Caco-2 (cell line): ENCODE measurements at regions of chr13 and their contacts with region 1.

Region 1: GRCh38 chr13:112968908-112969691 is at the start of gene MCF2L:
- DNase-seq: peak; percentile 60 to 73
- H3K4me3 ChIP-seq: peak within 1 kb of the TSS; percentile 89
- H3K4me3 Mint-ChIP-seq: peak within 1 kb of the TSS; percentile 85
- H3K27ac Mint-ChIP-seq: peak within 1 kb of the TSS; percentile 60
- H3K4me1 ChIP-seq: peaks cover 4% of the 10 kb centered on the region; the same call in 1 of the 2 replicates
- H3K4me1 Mint-ChIP-seq: no peaks in the 10 kb centered on the region
- H3K27me3 ChIP-seq: no peaks in the 10 kb centered on the region; the same call in 1 of the 2 replicates
- H3K27me3 Mint-ChIP-seq: peaks cover 5% of the 10 kb centered on the region
- CTCF ChIP-seq: peak in 1 of 2 experiments; percentile 49
- total RNA-seq, gene MCF2L: 22.1 and 24.4 TPM in 2 replicates

Region 2: DNA sequence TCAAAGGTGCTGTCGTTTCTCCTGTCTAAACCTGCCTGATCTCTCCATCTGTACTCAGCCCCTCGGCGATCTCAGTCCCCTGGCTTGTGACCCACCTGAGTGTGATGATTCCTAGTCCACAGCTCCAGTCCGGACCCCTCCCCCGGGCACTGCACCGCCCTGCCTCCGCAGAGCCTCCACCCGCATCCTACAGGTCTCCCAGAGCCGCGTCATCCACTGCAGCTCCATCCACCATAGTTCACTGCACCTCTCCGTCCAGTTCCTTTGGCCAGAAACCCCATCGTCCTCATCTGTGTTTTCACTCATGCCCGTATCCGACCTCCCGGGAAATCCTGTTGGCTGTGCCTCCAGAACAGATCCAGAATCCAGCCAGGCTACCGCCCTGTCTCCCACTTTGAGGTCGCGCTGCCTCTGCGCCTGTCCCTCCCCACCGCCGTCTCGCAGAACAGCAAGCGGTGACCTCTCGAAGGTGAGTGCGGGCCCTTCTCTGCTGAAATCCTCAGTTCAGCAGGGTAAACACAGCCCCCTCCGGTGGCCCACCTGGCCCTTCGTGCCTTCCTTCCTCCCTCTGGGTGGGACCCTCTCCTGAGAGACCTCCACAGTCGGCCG is 51.9 kb before region 1 on chr13:
- CTCF ChIA-PET with region 1: no interaction called
- POLR2A ChIA-PET with region 1: no interaction called
- intact Hi-C with region 1: no loop called
- DNase-seq: no peak
- H3K4me3 ChIP-seq: no peak overlapping the region
- H3K4me3 Mint-ChIP-seq: no peak overlapping the region
- H3K27ac Mint-ChIP-seq: peak overlapping the region; percentile 13
- H3K4me1 ChIP-seq: peaks cover 11% of the 10 kb centered on the region
- H3K4me1 Mint-ChIP-seq: peaks cover 19% of the 10 kb centered on the region
- H3K27me3 ChIP-seq: no peaks in the 10 kb centered on the region
- H3K27me3 Mint-ChIP-seq: no peaks in the 10 kb centered on the region
- CTCF ChIP-seq: no peak

Region 3: DNA sequence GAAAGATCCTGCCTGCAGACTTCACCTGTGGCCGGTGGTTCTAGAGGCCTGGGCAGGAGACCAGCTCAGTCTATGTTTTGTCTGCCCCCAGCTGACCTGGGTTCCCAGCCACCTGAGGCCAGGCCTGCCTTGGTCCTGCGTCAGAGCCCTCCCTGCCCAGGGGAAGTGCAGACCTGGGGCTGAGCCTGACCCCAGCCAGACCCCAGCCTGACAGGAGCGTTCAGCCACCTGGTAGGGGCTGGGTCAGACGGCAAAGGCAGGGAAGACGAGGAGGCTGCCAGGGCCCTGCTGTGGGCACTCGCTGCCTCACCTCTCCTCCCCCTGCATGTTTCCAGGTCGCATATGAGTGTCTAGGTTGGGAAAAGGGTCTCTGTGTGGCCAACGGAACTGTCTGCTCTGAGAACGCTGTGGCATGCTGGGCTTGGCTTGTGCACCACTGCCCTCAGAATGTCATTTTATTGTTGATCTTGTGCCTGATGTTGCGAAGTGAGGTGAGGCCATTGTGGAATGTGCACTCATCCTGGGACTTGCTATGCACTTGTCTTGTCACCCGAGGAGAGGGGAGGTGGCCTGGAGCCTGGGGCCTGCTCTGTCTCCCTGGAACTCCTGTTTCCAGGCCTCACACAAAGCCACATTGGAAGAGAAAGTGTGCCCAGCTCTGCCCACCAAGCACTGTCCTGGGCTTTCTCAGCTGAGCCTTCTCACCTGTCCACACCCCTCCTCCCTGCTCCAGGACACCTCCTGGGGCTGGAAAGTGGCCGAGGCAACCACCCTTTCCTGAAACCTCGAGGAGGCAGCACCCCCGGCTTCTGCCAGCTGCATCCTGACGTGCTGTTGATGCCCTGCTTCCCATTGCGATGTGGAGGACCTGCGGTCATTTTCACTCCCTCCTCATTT is 15.3 kb before region 1 on chr13:
- CTCF ChIA-PET with region 1: no interaction called
- POLR2A ChIA-PET with region 1: no interaction called
- intact Hi-C with region 1: loop called (anchors 1 kb)
- DNase-seq: peak; percentile 31 to 49
- H3K4me3 ChIP-seq: no peak overlapping the region
- H3K4me3 Mint-ChIP-seq: no peak overlapping the region
- H3K27ac Mint-ChIP-seq: no peak overlapping the region
- H3K4me1 ChIP-seq: peaks cover 17% of the 10 kb centered on the region; the same call in 1 of the 2 replicates
- H3K4me1 Mint-ChIP-seq: peaks cover 6% of the 10 kb centered on the region
- H3K27me3 ChIP-seq: no peaks in the 10 kb centered on the region
- H3K27me3 Mint-ChIP-seq: no peaks in the 10 kb centered on the region
- CTCF ChIP-seq: no peak

Region 4: DNA sequence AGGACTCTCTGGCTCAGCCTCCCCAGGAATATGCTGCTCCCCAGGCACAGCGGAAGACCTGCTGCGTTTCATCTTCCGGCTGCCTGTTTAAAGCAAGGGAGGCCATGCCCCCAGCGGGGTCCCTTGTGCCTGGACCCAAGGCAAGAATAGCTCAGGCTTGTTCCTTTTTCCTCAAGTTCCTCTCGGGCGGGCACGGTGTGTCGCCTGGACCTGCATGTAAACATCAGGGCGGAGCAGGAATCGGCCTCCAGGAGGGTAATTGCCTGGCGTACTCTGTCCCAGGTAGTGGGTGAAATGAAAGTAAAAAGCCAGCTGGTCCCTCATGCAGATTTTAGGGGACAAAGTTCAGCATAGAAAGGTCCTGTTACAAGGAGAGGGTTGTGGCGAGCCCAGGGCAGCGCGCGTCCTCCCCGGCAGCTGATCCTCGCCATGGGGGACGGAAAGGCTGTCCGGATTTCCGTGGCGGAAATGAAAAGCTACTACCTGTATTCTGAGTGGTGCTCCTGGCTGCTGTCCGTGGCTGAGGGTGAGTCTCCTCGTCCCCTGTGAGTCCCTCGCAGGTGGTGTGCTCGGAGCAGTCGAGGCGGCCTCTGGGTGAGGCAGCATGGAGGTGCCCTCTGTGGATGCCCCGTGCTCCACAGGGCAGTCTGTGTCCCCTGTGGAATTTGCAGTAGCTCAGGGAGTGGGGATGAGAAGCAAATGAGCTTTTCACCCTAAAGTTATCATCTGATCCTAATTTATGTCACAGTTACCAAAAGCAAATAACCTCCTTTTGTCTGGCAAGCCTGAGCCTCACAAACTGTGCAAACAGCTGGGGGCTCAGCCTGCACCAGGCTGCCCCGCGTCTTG is 16.1 kb after region 1 on chr13:
- CTCF ChIA-PET with region 1: interaction called, 10 read pairs
- POLR2A ChIA-PET with region 1: no interaction called
- intact Hi-C with region 1: loop called (anchors 1 kb)
- DNase-seq: peak in 1 of 2 experiments; percentile 60
- H3K4me3 ChIP-seq: peak overlapping the region; percentile 33
- H3K4me3 Mint-ChIP-seq: peak overlapping the region; percentile 66
- H3K27ac Mint-ChIP-seq: peak overlapping the region; percentile 53
- H3K4me1 ChIP-seq: peaks cover 27% of the 10 kb centered on the region
- H3K4me1 Mint-ChIP-seq: peaks cover 20% of the 10 kb centered on the region
- H3K27me3 ChIP-seq: no peaks in the 10 kb centered on the region
- H3K27me3 Mint-ChIP-seq: no peaks in the 10 kb centered on the region
- CTCF ChIP-seq: no peak

Region 5: DNA sequence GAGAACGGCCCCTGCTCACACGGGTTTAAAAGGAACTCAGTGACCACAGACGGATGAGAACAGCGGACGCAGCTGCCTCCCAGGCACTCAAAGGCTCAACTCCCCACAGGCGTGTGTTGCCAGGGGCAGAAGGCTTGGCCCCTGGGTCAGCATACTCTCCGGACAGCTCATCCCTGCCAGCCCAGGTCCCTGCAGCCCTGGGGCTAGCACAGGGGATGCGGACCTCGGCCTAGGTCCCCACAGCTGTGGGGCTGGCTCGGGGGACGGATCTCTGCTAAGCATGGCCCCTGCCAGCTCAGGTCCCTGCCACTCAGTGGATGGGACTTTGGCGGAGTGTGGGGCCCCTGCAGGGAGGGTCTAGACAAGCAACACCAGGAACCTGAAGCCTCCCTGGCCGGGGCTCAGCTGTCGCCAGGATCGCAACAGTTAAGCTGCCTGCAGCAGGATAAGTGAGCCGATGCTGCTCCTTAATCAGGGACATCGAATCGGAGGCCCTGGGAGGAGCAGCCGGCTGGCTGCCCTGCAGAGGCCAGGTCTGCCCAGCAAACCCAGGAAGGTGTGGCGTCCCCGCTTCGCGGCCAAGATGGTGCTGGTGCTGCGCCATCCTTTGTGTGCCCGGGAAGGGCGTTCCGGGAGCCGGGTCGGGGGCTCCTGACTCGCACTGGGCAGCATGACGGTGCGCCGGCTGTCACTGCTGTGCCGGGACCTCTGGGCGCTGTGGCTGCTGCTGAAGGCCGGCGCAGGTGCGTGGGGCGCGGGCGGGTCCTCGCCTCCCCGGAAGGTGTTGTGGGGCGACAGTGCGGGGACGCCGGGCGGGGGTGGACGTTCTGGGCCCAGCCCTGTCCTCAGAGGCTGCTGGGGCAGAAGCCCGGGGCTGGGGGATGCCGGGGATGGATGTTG is 32.4 kb after region 1 on chr13:
- CTCF ChIA-PET with region 1: interaction called, 18 read pairs
- POLR2A ChIA-PET with region 1: no interaction called
- intact Hi-C with region 1: loop called (anchors 1 kb)
- DNase-seq: peak; percentile 79 to 86
- H3K4me3 ChIP-seq: peak overlapping the region; percentile 36
- H3K4me3 Mint-ChIP-seq: peak overlapping the region; percentile 78
- H3K27ac Mint-ChIP-seq: no peak overlapping the region
- H3K4me1 ChIP-seq: peaks cover 21% of the 10 kb centered on the region
- H3K4me1 Mint-ChIP-seq: no peaks in the 10 kb centered on the region
- H3K27me3 ChIP-seq: no peaks in the 10 kb centered on the region
- H3K27me3 Mint-ChIP-seq: no peaks in the 10 kb centered on the region
- CTCF ChIP-seq: no peak

Region 6: GRCh38 chr13:113017506-113018215 is 48.6 kb after region 1 on chr13:
- CTCF ChIA-PET with region 1: no interaction called
- POLR2A ChIA-PET with region 1: no interaction called
- intact Hi-C with region 1: no loop called
- DNase-seq: no peak
- H3K4me3 ChIP-seq: no peak overlapping the region
- H3K4me3 Mint-ChIP-seq: no peak overlapping the region
- H3K27ac Mint-ChIP-seq: no peak overlapping the region
- H3K4me1 ChIP-seq: peaks cover 17% of the 10 kb centered on the region
- H3K4me1 Mint-ChIP-seq: peaks cover 11% of the 10 kb centered on the region
- H3K27me3 ChIP-seq: no peaks in the 10 kb centered on the region
- H3K27me3 Mint-ChIP-seq: no peaks in the 10 kb centered on the region
- CTCF ChIP-seq: no peak

Region 7: GRCh38 chr13:113029487-113030258 is 60.6 kb after region 1 on chr13:
- CTCF ChIA-PET with region 1: interaction called, 8 read pairs
- POLR2A ChIA-PET with region 1: no interaction called
- intact Hi-C with region 1: loop called (anchors 1 kb)
- DNase-seq: peak; percentile 74 to 87
- H3K4me3 ChIP-seq: no peak overlapping the region
- H3K4me3 Mint-ChIP-seq: no peak overlapping the region
- H3K27ac Mint-ChIP-seq: no peak overlapping the region
- H3K4me1 ChIP-seq: no peaks in the 10 kb centered on the region
- H3K4me1 Mint-ChIP-seq: peaks cover 11% of the 10 kb centered on the region
- H3K27me3 ChIP-seq: no peaks in the 10 kb centered on the region
- H3K27me3 Mint-ChIP-seq: no peaks in the 10 kb centered on the region
- CTCF ChIP-seq: peak; percentile 95 to 97

Region 8: DNA sequence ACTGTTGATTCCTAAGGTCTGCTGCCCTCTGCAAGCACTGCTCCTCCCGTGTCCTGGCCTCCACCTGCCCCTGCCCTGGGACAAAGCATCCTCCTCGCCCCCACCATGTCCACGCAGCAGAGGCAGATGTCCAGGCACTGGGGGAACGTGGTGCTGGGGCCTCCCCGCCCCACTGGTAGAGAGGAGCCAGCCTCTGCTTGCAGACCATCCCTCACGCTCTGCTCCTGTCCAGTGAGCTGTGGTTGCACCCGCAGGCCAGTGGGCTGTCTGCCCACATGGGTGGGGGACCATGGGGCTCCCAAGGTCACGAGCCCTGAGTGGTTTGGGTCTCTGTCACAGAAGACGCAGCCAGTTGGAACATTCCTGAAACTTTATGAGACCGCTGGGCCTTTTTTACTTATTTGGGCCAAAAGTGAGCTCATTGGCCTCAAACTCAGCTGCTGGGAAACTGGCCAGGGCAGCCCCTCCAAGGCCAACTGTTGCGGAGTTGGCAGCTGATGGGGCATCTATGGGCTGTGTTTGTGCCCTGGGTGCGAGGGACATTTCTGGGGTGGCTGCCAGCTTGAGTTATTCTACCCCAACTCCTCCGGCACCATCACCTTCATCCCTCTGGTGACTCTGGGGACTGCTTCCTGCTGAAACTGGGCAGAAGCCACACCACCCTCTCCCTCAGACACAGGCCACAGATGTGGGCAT is 71.6 kb after region 1 on chr13:
- CTCF ChIA-PET with region 1: no interaction called
- POLR2A ChIA-PET with region 1: no interaction called
- intact Hi-C with region 1: no loop called
- DNase-seq: no peak
- H3K4me3 ChIP-seq: no peak overlapping the region
- H3K4me3 Mint-ChIP-seq: no peak overlapping the region
- H3K27ac Mint-ChIP-seq: no peak overlapping the region
- H3K4me1 ChIP-seq: no peaks in the 10 kb centered on the region
- H3K4me1 Mint-ChIP-seq: no peaks in the 10 kb centered on the region
- H3K27me3 ChIP-seq: no peaks in the 10 kb centered on the region
- H3K27me3 Mint-ChIP-seq: no peaks in the 10 kb centered on the region
- CTCF ChIP-seq: no peak